ENCODE measurements at regions of chr3 and their contacts with region 1.

Region 1: DNA sequence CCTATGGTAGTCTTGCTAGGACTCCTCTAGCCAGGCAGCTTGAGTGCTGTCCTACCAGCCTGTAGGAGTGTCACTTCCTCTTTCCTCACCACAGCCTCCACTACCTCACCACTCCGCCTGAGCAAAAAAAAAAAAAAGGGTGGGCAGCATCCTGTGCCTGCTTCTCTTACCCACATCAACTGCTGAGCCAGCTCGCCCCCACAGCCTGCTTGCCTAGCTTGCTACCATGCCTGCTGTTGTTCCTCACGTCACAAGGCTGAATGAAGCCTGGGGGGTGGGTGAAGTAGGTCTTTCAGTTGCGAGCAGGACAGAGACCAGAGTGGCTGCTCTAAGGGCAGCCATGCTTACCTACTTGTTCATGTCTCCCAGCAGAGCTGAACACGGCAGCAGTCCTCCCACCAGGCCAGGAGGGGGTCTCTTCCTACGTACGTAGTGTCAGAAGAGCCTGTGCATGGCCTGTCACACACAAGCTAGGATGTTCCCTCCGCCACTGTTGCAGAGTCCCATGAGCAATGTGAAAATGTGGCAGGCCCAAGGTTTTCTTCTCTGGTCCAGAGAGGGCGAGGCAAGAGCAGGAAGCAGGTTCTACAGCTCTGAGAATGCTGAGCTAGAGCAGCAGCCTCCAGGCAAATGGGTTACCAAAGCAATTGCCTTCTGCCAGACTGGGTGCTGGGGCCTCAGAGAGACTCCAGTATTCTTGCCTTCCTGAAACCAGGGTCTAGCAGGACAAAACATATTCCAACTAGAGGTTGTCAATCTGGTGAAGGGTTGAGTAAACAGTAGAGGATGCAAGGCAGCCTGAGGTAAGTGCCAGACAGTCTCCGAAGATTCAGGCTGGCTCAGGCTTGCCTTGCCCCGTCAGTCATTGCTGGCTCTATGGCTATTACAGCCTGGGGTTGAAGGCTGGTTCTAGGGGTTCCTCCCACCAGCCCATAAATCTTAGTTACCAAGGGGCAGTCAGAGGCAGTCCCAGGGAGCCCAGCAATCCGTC is 8.1 kb downstream of the PPM1M start:
- DNase-seq: peak; percentile 92
- ATAC-seq: peak; percentile 96
- H3K4me3 ChIP-seq: peak overlapping the region in 2 of 5 experiments; percentile 25 to 35
- H3K4me3 Mint-ChIP-seq: peak overlapping the region; percentile 78
- H3K27ac ChIP-seq: peak overlapping the region; percentile 72 to 89
- H3K27ac Mint-ChIP-seq: peak overlapping the region; percentile 94
- H3K4me1 ChIP-seq: peaks cover 22 to 29% of the 10 kb centered on the region in 2 donors
- H3K4me1 Mint-ChIP-seq: peaks cover 39% of the 10 kb centered on the region
- H3K27me3 ChIP-seq: no peaks in the 10 kb centered on the region
- H3K27me3 Mint-ChIP-seq: no peaks in the 10 kb centered on the region
- CTCF ChIP-seq: no peak

Region 2: DNA sequence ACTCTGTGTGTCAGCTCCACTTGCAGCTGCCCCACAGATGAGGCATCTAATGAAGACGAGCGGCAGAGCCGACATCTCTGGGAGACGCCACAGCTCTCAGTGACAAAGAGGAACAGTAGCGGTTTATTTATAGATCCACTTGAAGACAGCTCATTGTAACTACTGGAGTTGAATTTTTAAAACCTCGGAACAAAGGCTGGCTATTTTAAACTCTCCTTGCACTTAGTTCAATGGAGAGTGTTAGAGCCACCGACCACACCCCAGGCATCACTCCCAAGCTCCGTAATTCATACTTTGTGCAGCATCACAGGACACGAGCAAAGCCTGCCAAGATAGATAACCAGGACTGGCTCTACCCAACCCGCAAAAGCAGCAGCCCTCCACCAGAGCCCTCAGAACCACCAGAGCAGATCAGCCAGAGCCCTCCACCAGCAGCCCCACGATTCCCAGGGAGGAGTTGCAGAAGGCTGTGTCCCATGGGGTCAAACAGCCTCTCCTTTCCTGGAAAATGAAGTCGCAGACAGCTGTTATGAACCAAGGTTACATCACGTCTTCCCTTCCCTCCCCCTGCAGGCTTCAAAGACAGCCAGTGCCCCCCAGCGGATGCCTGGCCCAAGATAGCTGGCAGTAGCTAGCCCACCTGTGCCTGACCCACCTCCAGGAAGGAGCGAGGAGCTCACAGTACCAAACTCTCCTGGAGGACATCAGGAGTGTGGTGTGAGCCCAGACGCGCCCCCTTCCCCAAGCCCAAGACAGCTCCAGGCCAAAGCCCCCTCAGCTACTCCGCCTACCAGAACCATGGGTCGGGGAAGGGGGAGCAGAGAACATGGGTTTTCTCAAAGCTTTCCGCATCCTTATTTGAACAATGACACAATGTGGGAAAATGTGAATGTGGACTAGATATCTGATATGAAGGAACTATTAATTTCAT is 145.0 kb before region 1 on chr3:
- CTCF ChIA-PET with region 1: no interaction called
- POLR2A ChIA-PET with region 1: no interaction called
- intact Hi-C with region 1: no loop called
- DNase-seq: no peak
- ATAC-seq: no peak
- H3K4me3 ChIP-seq: no peak overlapping the region
- H3K4me3 Mint-ChIP-seq: no peak overlapping the region
- H3K27ac ChIP-seq: no peak overlapping the region
- H3K27ac Mint-ChIP-seq: no peak overlapping the region
- H3K4me1 ChIP-seq: peaks cover 0 to 7% of the 10 kb centered on the region in 2 donors
- H3K4me1 Mint-ChIP-seq: peaks cover 3% of the 10 kb centered on the region
- H3K27me3 ChIP-seq: no peaks in the 10 kb centered on the region
- H3K27me3 Mint-ChIP-seq: no peaks in the 10 kb centered on the region
- CTCF ChIP-seq: no peak

Region 3: GRCh38 chr3:52220380-52221026 is 33.1 kb before region 1 on chr3:
- CTCF ChIA-PET with region 1: interaction called, 33 read pairs
- POLR2A ChIA-PET with region 1: interaction called, 18 read pairs
- intact Hi-C with region 1: loop called (anchors 2 kb)
- DNase-seq: peak; percentile 85
- ATAC-seq: peak; percentile 59
- H3K4me3 ChIP-seq: no peak overlapping the region
- H3K4me3 Mint-ChIP-seq: peak overlapping the region; percentile 66
- H3K27ac ChIP-seq: no peak overlapping the region
- H3K27ac Mint-ChIP-seq: peak overlapping the region; percentile 86
- H3K4me1 ChIP-seq: peaks cover 64 to 90% of the 10 kb centered on the region in 2 donors
- H3K4me1 Mint-ChIP-seq: peaks cover 78% of the 10 kb centered on the region
- H3K27me3 ChIP-seq: no peaks in the 10 kb centered on the region
- H3K27me3 Mint-ChIP-seq: no peaks in the 10 kb centered on the region
- CTCF ChIP-seq: peak; percentile 83

Region 4: GRCh38 chr3:52238761-52239701 is 14.6 kb before region 1 on chr3 and contains the start of gene TWF2:
- CTCF ChIA-PET with region 1: interaction called, 32 read pairs
- POLR2A ChIA-PET with region 1: interaction called, 25 read pairs
- intact Hi-C with region 1: loop called (anchors 1 kb)
- DNase-seq: peak; percentile 92
- ATAC-seq: peak; percentile 90
- H3K4me3 ChIP-seq: peak within 1 kb of the TSS; percentile 75 to 99 (median 93)
- H3K4me3 Mint-ChIP-seq: peak within 1 kb of the TSS; percentile 99
- H3K27ac ChIP-seq: peak within 1 kb of the TSS; percentile 53 to 63
- H3K27ac Mint-ChIP-seq: peak within 1 kb of the TSS; percentile 93
- H3K4me1 ChIP-seq: peaks cover 41 to 56% of the 10 kb centered on the region in 2 donors
- H3K4me1 Mint-ChIP-seq: peaks cover 61% of the 10 kb centered on the region
- H3K27me3 ChIP-seq: no peaks in the 10 kb centered on the region
- H3K27me3 Mint-ChIP-seq: no peaks in the 10 kb centered on the region
- CTCF ChIP-seq: peak; percentile 68
- total RNA-seq, gene TWF2: 53.5 and 60.3 TPM in 2 replicates

Region 5: GRCh38 chr3:52291508-52292181 is 38.0 kb after region 1 on chr3:
- CTCF ChIA-PET with region 1: interaction called, 3 read pairs
- POLR2A ChIA-PET with region 1: interaction called, 4 read pairs
- intact Hi-C with region 1: loop called (anchors 1 kb)
- DNase-seq: peak; percentile 65
- ATAC-seq: peak; percentile 31
- H3K4me3 ChIP-seq: no peak overlapping the region
- H3K4me3 Mint-ChIP-seq: peak overlapping the region; percentile 37
- H3K27ac ChIP-seq: no peak overlapping the region
- H3K27ac Mint-ChIP-seq: peak overlapping the region; percentile 33
- H3K4me1 ChIP-seq: peaks cover 12 to 15% of the 10 kb centered on the region in 2 donors
- H3K4me1 Mint-ChIP-seq: peaks cover 30% of the 10 kb centered on the region
- H3K27me3 ChIP-seq: no peaks in the 10 kb centered on the region
- H3K27me3 Mint-ChIP-seq: no peaks in the 10 kb centered on the region
- CTCF ChIP-seq: peak; percentile 69